ENCODE measurements at regions of chr6 and their contacts with region 1.

Region 1: GRCh38 chr6:18101271-18101670 is 21.2 kb downstream of the NHLRC1 start:
- DNase-seq: no peak
- H3K4me3 ChIP-seq: no peak overlapping the region
- H3K27ac ChIP-seq: peak overlapping the region in 41 of 59 donors; percentile 77 to 99 (median 94)
- H3K27me3 ChIP-seq: no peaks in the 10 kb centered on the region
- CTCF ChIP-seq: no peak

Region 2: DNA sequence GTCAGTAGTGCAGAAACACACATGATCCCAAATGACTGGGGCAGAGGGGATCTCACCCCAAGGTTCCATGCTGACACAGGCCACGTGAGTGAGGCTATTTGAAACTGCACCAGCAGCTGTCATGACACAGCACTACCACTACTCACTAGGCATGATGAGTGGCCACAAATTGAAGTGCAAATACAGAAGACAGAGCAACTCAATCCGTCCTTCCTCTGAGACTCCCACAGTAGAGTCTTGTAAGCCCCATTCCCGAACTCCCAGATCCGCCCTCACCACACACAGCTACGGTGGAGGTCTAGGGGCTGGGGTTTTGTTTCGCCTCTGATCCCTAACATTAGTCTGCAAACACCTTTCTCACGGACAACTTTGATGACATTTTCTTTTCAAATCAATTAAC is 281.2 kb before region 1 on chr6:
- intact Hi-C with region 1: no loop called
- DNase-seq: peak in 2 of 10 donors; percentile 22 to 57
- H3K4me3 ChIP-seq: no peak overlapping the region
- H3K27ac ChIP-seq: peak overlapping the region in 14 of 59 donors; percentile 2 to 45 (median 22)
- H3K27me3 ChIP-seq: no peaks in the 10 kb centered on the region
- CTCF ChIP-seq: peak in 15 of 56 donors; percentile 12 to 38 (median 15)

Region 3: DNA sequence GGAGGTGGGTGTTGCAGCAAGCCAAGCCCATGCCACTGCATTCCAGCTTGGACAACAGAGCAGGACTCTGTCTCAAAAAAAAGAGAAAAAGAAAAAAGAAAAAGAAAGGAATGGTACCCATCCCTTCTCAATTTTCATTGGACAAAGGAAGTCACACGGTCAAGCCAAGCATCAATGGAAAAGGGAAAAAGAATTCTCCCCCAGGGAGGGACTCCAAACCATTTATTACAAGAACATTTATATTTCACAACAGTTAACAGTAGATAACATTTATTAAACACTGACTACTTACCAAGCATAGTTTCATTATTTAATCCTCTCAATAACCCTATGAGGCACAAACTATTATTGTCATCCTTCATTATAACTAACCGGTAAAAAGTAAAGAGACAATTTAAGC is 107.3 kb before region 1 on chr6:
- intact Hi-C with region 1: loop called in 1 of 2 experiments (anchors 5 kb)
- DNase-seq: no peak
- H3K4me3 ChIP-seq: no peak overlapping the region
- H3K27ac ChIP-seq: no peak overlapping the region
- H3K27me3 ChIP-seq: no peaks in the 10 kb centered on the region
- CTCF ChIP-seq: no peak

Measured in dorsolateral prefrontal cortex (tissue), 120 donors.